GM12878 (cell line): ENCODE measurements at regions of chr5 and their contacts with region 1.

Region 1: DNA sequence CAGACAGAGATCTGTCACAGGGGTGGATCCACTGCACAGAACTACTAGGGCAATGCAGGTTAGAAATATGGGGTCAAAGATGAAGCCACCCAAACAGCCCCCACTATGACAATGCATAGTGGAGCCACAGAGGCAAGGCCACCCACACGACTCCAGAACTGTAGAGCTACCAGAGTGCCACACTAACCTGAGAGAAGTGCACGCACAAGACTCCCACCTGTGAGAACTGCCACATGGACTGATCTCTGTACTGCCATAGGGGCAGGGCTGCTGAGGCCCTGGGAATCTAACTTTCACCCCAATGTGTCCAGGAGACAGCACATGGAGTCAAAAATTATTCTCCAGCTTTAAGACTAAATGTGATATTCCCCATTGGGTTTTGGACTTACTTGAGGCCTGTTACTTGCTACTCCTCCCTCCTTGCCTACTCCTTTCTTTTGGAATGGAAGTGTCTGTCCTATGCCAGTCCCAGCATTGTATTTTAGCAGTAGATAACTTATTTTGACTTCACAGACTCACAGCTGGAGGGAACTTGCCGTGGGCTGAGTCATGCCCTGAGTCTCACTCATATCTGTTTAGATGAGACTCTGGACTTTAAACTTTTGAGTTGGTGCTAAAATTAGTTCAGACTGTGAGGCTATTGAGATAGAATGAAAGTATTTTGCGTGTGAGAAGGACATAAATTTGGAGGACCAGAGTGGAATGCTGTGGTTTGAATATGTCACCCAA is 853.3 kb downstream of the MAT2B start:
- DNase-seq: no peak
- ATAC-seq: peak; percentile 63
- H3K4me3 ChIP-seq: no peak overlapping the region
- H3K27ac ChIP-seq: no peak overlapping the region
- H3K4me1 ChIP-seq: no peaks in the 10 kb centered on the region
- H3K27me3 ChIP-seq: no peaks in the 10 kb centered on the region
- CTCF ChIP-seq: no peak
- EP300 ChIP-seq: no peak
- POLR2A ChIP-seq: no peak
- RAD21 ChIP-seq: no peak

Region 2: GRCh38 chr5:164119806-164120447 is 238.8 kb before region 1 on chr5:
- CTCF ChIA-PET with region 1: no interaction called
- POLR2A ChIA-PET with region 1: no interaction called
- RAD21 ChIA-PET with region 1: no interaction called
- SMC1A ChIA-PET with region 1: no interaction called
- in situ Hi-C with region 1: no loop called
- intact Hi-C with region 1: no loop called
- DNase-seq: no peak
- ATAC-seq: peak; percentile 78
- H3K4me3 ChIP-seq: no peak overlapping the region
- H3K27ac ChIP-seq: no peak overlapping the region; the same call in 1 of the 2 replicates
- H3K4me1 ChIP-seq: no peaks in the 10 kb centered on the region
- H3K27me3 ChIP-seq: no peaks in the 10 kb centered on the region
- CTCF ChIP-seq: no peak
- EP300 ChIP-seq: no peak
- POLR2A ChIP-seq: no peak
- RAD21 ChIP-seq: no peak

Region 3: DNA sequence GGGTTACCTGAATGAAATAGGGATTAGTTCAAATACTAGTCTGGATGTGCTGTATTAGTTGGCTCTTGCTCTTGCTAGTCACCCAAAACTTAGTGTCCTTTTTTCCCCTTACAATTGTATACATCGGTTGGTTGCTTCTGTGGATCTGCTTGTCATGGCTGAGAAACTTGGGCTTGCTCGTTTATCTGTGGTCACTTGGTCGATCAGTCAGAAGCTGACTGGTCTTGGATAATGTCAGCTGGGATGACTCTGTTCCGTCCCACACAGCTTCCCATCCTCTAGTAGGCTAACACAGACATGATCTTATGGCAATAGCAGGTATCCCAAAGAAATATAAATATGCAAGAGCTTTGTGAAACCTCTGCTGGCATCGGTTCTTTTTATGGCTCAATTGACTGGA is 45.9 kb before region 1 on chr5:
- CTCF ChIA-PET with region 1: no interaction called
- POLR2A ChIA-PET with region 1: interaction called, 4 read pairs
- RAD21 ChIA-PET with region 1: interaction called, 15 read pairs
- SMC1A ChIA-PET with region 1: interaction called, 7 read pairs
- in situ Hi-C with region 1: no loop called
- intact Hi-C with region 1: no loop called
- DNase-seq: no peak
- ATAC-seq: no peak
- H3K4me3 ChIP-seq: no peak overlapping the region
- H3K27ac ChIP-seq: no peak overlapping the region
- H3K4me1 ChIP-seq: no peaks in the 10 kb centered on the region
- H3K27me3 ChIP-seq: no peaks in the 10 kb centered on the region
- CTCF ChIP-seq: no peak
- EP300 ChIP-seq: no peak
- POLR2A ChIP-seq: no peak
- RAD21 ChIP-seq: no peak

Region 4: GRCh38 chr5:164345173-164345849 is 13.4 kb before region 1 on chr5:
- CTCF ChIA-PET with region 1: interaction called, 7 read pairs
- POLR2A ChIA-PET with region 1: interaction called, 19 read pairs
- RAD21 ChIA-PET with region 1: interaction called, 99 read pairs
- SMC1A ChIA-PET with region 1: interaction called, 128 read pairs
- in situ Hi-C with region 1: no loop called
- intact Hi-C with region 1: no loop called
- DNase-seq: no peak
- ATAC-seq: no peak
- H3K4me3 ChIP-seq: no peak overlapping the region
- H3K27ac ChIP-seq: no peak overlapping the region
- H3K4me1 ChIP-seq: no peaks in the 10 kb centered on the region
- H3K27me3 ChIP-seq: no peaks in the 10 kb centered on the region
- CTCF ChIP-seq: no peak
- EP300 ChIP-seq: no peak
- POLR2A ChIP-seq: no peak
- RAD21 ChIP-seq: no peak

Region 5: GRCh38 chr5:164370841-164371240 is 12.1 kb after region 1 on chr5:
- CTCF ChIA-PET with region 1: interaction called, 4 read pairs
- POLR2A ChIA-PET with region 1: interaction called, 8 read pairs
- RAD21 ChIA-PET with region 1: interaction called, 10 read pairs
- SMC1A ChIA-PET with region 1: interaction called, 28 read pairs
- in situ Hi-C with region 1: no loop called
- intact Hi-C with region 1: no loop called
- DNase-seq: no peak
- ATAC-seq: no peak
- H3K4me3 ChIP-seq: no peak overlapping the region
- H3K27ac ChIP-seq: no peak overlapping the region
- H3K4me1 ChIP-seq: no peaks in the 10 kb centered on the region
- H3K27me3 ChIP-seq: no peaks in the 10 kb centered on the region
- CTCF ChIP-seq: no peak
- EP300 ChIP-seq: no peak
- POLR2A ChIP-seq: no peak
- RAD21 ChIP-seq: no peak